Left colon (tissue), 2 donors: ENCODE measurements at regions of chr4 and their contacts with region 1.

Region 1: GRCh38 chr4:13766761-13767540 is 139.4 kb upstream of the BOD1L1 start:
- DNase-seq: no peak
- ATAC-seq: no peak

Region 2: DNA sequence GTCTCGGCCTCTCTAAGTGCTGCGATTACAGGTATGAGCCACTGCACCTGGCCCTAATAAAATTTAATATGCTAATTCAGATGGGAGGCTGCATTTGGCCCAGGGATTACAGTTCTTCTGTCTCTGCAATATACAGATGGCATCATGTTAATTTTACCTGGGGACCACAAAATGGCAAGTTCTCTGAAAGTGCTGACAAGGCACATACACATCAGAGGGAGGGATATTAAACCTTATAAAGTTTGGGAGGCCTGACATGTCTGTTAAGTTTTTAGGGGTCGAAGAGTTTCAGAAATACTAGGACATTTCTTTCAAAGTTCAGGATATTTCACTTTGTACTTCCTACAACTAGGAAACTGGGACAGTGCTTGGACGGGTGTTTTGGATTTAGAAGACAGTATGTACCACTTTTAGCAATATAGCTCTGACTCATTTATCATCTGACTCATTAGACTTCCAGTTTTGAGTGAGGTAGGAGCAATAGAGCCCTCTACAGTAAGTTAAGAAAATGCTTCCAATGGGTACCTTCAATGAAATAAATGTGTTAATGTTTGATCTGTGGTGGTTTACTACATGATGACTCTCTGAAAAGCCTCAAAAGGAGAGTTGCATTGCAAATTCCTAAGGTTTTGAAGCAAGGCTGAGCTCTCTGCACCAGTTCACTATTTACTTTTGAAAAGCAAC is 1357.3 kb before region 1 on chr4:
- intact Hi-C with region 1: loop called in 1 of 2 experiments (anchors 10 kb)
- DNase-seq: no peak
- ATAC-seq: peak; percentile 67

Region 3: DNA sequence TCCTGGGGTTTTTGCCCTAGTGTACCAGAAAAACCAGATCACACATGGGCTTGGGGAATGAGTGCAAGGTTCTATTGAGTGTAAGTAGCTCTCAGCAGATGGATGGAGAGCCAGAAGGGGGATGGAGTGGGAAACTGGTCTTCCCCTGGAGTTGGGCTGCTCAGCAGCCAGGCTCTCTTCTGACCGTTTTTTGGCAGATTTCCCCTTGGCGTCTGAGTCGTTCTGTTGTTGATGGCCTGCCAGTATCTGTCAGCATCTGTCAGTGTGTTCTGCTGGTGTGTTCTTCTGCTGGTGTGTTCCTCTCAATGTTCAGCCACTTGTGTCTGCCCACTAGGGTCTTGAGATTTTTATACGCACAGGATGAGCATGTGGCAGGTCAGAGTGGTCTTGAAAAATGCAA is 601.4 kb after region 1 on chr4:
- intact Hi-C with region 1: no loop called
- DNase-seq: no peak
- ATAC-seq: no peak